Gastrocnemius medialis (tissue), 4 donors: ENCODE measurements at regions of chr3 and their contacts with region 1.

Region 1: DNA sequence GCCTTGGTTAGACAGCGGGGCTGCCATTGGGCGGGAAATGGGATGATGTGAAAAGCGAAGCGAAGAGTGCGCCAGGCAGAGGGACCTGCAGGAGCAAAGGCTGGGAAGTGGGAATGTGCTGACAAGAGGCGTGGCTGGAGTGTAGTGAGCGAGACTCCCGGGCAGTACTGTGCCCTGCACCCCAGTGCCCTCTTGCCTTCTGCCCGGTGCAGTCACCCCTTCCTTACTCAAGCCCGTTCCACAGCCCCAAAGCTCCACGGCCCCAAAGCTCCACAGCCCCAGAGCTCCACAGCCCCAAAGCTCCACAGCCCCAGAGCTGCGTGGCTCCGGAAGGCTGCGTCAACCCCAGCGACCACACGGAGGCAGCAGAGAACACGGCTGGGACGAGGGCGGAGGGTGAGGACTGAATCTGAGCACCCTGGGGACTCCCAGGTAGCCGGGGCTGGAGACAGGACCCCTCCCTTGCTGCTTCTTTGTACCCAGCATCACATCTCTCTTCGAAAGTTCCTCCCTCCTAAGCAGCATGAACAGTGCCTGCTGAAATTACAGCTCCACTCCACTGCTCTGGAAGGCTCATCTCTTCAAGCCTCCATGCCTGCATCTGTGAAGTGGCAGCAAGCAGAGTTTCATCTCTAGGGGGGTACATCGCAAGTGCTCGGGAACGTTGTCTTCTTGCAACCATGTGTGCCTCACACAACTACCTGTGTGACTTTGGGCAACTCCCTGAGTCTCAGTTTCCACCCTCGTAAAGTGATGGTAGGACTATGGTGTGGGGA is 108.9 kb downstream of the FBLN2 start:
- DNase-seq: no peak
- ATAC-seq: peak in 1 of 2 donors; percentile 65
- H3K4me3 ChIP-seq: no peak overlapping the region
- H3K27ac ChIP-seq: no peak overlapping the region
- H3K4me1 ChIP-seq: no peaks in the 10 kb centered on the region
- H3K27me3 ChIP-seq: peaks cover 3 to 16% (median 8%) of the 10 kb centered on the region in 3 donors
- CTCF ChIP-seq: peak; percentile 27 to 67 (median 56)
- POLR2A ChIP-seq: no peak

Region 2: GRCh38 chr3:13718436-13718835 is 60.6 kb after region 1 on chr3:
- in situ Hi-C with region 1: no loop called
- intact Hi-C with region 1: no loop called
- DNase-seq: no peak
- ATAC-seq: no peak
- H3K4me3 ChIP-seq: no peak overlapping the region
- H3K27ac ChIP-seq: no peak overlapping the region
- H3K4me1 ChIP-seq: no peaks in the 10 kb centered on the region
- H3K27me3 ChIP-seq: no peaks in the 10 kb centered on the region
- CTCF ChIP-seq: no peak
- POLR2A ChIP-seq: no peak

Region 3: DNA sequence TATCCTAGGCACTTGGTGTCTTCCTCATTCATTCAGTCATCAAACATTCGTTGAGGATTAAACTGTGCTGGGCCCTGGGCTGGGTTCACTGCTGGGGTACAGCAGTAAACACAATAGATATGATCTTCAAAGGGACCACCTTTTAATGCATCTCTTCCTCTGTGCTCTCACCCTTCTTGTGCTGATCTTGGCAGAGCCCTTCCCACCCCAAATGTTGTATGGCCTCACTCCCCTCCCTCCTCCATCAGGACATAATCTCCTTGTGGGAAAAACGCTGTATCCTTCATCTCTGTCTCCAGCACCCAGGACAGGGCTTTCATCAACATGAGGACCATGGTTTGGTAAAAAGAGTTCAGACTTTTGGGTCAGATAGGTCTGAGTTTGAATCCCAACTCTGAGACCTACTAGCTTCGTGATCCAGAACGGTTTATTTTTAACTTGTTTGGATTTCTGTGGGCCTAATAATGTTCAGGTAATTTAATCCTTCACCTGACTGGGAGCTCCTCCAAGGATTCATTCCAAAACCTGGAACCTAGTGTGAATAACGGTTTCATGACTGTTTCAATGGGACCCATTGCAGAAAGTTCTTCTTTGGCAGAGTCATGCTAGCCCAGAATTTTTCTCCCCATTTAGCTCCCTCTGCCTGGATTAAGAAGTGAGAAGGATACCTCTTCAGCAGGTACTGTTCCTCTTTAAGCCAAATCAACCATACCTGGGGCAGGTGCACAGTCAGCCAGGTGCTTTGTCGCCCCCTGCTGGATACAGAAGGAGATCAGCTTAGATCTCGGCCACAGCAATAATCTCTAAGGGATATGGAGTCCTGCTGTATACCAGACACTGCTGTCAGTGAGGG is 227.2 kb after region 1 on chr3:
- in situ Hi-C with region 1: no loop called
- intact Hi-C with region 1: loop called (anchors 5 kb)
- DNase-seq: no peak
- ATAC-seq: no peak
- H3K4me3 ChIP-seq: no peak overlapping the region
- H3K27ac ChIP-seq: no peak overlapping the region
- H3K4me1 ChIP-seq: no peaks in the 10 kb centered on the region
- H3K27me3 ChIP-seq: peaks cover 24 to 33% (median 32%) of the 10 kb centered on the region in 3 donors
- CTCF ChIP-seq: peak in 2 of 5 experiments; percentile 21 to 43
- POLR2A ChIP-seq: no peak